GM10248 (cell line): ENCODE measurements at regions of chr3 and their contacts with region 1.

Region 1: DNA sequence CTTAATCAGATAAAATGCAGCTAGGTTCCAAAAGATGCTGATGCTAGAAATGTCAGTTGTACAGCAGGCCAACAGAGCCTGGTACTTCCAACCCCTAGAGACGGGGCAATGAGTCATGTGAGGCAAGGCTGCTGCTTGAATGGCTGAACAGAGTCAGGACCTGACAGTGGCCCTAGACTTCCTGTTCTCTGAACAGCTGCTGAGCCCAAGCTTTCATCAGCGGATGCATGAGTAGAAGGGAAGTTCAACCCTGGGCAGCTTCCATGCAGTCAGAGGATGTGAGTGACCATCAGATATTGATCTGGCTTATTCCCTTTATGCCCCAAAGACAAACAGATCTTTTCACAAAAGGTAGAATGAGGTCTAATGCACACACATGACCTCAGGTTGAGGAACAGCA is 282.9 kb upstream of the COL8A1 start:
- DNase-seq: no peak
- CTCF ChIP-seq: no peak

Region 2: GRCh38 chr3:99366663-99367429 is 11.4 kb after region 1 on chr3:
- CTCF ChIA-PET with region 1: interaction called, 11 read pairs
- POLR2A ChIA-PET with region 1: no interaction called
- DNase-seq: no peak
- CTCF ChIP-seq: no peak

Region 3: GRCh38 chr3:99394831-99395778 is 39.6 kb after region 1 on chr3:
- CTCF ChIA-PET with region 1: no interaction called
- POLR2A ChIA-PET with region 1: no interaction called
- DNase-seq: no peak
- CTCF ChIP-seq: no peak